Heart left ventricle (tissue), 16 donors: ENCODE measurements at regions of chrX and their contacts with region 1.

Region 1: GRCh38 chrX:129900054-129900453 is 5.9 kb upstream of the UTP14A start:
- DNase-seq: no peak
- ATAC-seq: no peak
- H3K4me3 ChIP-seq: no peak overlapping the region
- H3K27ac ChIP-seq: no peak overlapping the region
- H3K4me1 ChIP-seq: no peaks in the 10 kb centered on the region
- H3K27me3 ChIP-seq: no peaks in the 10 kb centered on the region
- CTCF ChIP-seq: no peak
- POLR2A ChIP-seq: no peak

Region 2: DNA sequence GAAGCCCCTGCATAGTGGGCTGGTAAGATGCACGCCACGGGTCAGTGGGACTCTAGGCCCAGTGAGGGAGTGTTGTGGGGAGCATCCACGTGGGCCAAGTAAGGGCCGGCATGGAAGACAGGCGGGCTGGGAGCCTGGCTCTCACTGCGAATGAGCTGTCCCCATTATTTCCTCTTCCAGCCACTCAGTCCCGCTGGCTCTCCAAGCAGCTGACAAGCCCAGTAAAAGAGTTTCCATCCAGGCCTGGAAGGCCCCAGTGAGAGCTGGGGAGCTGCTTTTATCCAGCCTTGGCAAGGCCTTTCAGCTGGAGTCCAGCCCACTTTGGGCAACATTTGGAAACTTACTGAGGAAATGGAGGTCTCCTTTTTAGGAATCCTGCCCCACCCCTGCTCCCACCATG is 270.2 kb before region 1 on chrX:
- intact Hi-C with region 1: loop called in 1 of 10 experiments (anchors 5 kb)
- DNase-seq: peak in 2 of 5 donors; percentile 10 to 50
- ATAC-seq: peak; percentile 32 to 79 (median 58)
- H3K4me3 ChIP-seq: no peak overlapping the region
- H3K27ac ChIP-seq: peak overlapping the region in 6 of 12 donors; percentile 8 to 57 (median 31)
- H3K4me1 ChIP-seq: peaks cover 0 to 12% (median 0%) of the 10 kb centered on the region in 12 donors
- H3K27me3 ChIP-seq: no peaks in the 10 kb centered on the region
- CTCF ChIP-seq: no peak
- POLR2A ChIP-seq: no peak

Region 3: DNA sequence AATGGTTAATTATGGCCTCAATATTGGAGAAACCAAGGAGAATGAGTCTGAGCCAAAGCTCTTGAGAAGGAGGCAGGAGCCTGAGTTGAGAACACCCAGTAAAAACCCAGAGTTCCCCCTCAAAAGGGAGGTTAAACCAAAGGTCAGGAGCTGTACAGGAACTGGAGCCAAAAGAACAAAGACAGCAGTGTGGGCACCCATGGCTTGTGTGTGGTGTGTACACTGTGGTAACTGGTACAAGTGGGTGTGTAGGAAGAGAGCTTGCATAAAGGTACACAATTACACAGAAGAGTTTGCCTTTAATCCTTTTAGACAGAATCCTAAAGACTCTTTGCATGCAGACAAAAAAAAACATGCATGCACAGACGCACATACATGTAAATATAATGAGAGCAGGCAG is 1301.9 kb after region 1 on chrX:
- intact Hi-C with region 1: no loop called
- DNase-seq: no peak
- ATAC-seq: no peak
- H3K4me3 ChIP-seq: no peak overlapping the region
- H3K27ac ChIP-seq: no peak overlapping the region
- H3K4me1 ChIP-seq: no peaks in the 10 kb centered on the region
- H3K27me3 ChIP-seq: peaks cover 0 to 23% (median 0%) of the 10 kb centered on the region in 9 donors
- CTCF ChIP-seq: no peak
- POLR2A ChIP-seq: no peak